Activated naive CD4-positive, alpha-beta T cell treated with anti-CD3 and anti-CD28 coated beads for 36 hours (primary cell): ENCODE measurements at regions of chr16 and their contacts with region 1.

Region 1: DNA sequence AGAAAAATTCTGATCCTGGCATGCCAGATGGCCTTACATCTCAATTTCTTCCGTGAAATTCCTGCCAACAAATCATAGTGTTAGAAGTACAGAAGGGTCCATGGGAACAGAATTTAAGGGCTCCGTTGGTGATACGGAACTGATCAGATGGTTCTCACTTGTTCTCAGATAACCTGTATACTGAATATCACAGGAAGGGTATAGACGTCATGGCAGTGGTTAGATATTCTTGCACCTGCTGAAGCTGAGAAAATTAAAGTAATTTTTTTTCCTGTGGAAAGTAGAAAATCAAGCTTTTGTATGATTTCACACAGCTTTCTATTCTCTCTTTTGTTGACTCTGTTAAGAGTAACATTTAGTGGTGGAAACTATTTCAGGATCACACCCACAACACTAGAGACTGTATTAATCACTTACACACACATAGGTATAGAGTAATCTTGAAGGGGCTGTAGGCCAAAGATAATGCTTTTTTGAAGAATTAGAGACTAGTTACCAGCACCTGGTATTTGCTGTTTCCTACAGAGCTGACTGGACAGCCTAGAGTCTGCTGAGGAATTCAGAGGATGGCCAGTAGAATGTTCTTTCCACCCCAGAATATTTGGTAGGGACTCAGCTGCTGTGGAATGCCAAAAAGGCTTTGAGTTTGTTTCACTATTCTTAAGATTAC is 7.5 kb downstream of the TENT4B start:
- DNase-seq: no peak
- H3K4me3 Mint-ChIP-seq: peak overlapping the region; percentile 36
- H3K27ac Mint-ChIP-seq: peak overlapping the region; percentile 83
- H3K4me1 Mint-ChIP-seq: peaks cover 74% of the 10 kb centered on the region
- H3K27me3 Mint-ChIP-seq: no peaks in the 10 kb centered on the region

Region 2: DNA sequence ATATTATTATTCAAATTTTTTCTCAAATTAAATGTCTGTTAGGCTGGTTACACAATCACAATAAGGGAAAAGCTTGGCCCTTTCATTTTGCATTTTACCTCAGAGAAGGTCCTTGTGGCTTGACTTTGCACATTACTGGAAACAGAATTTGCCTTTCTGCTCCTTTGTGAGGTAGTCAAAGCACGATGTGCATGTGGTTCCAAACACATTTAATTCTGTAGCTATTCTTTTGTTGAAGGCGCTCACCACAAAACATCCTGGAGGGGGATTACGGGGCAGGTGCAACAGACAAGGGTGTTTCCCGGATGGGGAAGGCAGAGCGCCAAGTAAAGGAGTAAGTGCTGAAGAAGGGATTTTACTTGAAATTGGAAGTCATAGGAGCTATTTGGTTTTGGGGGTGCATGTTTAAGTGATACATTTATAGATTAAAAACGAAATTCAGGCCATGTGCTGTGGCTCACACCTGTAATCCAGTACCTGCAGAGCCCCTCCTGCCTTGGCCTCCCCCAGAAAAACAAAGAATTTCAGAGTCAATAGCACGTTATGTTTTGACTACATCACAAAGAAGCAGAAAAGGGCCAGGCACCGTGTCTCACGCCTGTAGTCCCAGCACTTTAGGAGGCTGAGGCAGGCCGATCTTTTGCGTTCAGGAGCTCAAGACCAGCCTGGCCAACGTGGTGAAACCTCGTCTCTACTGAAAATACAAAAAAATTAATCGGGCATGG is 38.7 kb before region 1 on chr16:
- CTCF ChIA-PET with region 1: interaction called, 4 read pairs
- intact Hi-C with region 1: loop called (anchors 1 kb)
- DNase-seq: peak; percentile 93
- H3K4me3 Mint-ChIP-seq: peak overlapping the region; percentile 22
- H3K27ac Mint-ChIP-seq: peak overlapping the region; percentile 75
- H3K4me1 Mint-ChIP-seq: peaks cover 20% of the 10 kb centered on the region
- H3K27me3 Mint-ChIP-seq: no peaks in the 10 kb centered on the region

Region 3: GRCh38 chr16:50172195-50172922 is 11.7 kb after region 1 on chr16:
- CTCF ChIA-PET with region 1: interaction called, 3 read pairs
- intact Hi-C with region 1: loop called (anchors 1 kb)
- DNase-seq: no peak
- H3K4me3 Mint-ChIP-seq: no peak overlapping the region
- H3K27ac Mint-ChIP-seq: peak overlapping the region; percentile 71
- H3K4me1 Mint-ChIP-seq: peaks cover 74% of the 10 kb centered on the region
- H3K27me3 Mint-ChIP-seq: no peaks in the 10 kb centered on the region

Region 4: GRCh38 chr16:50195276-50195675 is 34.6 kb after region 1 on chr16:
- CTCF ChIA-PET with region 1: no interaction called
- intact Hi-C with region 1: no loop called
- DNase-seq: no peak
- H3K4me3 Mint-ChIP-seq: no peak overlapping the region
- H3K27ac Mint-ChIP-seq: no peak overlapping the region
- H3K4me1 Mint-ChIP-seq: peaks cover 70% of the 10 kb centered on the region
- H3K27me3 Mint-ChIP-seq: no peaks in the 10 kb centered on the region